GM12878 (cell line): ENCODE measurements at regions of chr11 and their contacts with region 1.

Region 1: DNA sequence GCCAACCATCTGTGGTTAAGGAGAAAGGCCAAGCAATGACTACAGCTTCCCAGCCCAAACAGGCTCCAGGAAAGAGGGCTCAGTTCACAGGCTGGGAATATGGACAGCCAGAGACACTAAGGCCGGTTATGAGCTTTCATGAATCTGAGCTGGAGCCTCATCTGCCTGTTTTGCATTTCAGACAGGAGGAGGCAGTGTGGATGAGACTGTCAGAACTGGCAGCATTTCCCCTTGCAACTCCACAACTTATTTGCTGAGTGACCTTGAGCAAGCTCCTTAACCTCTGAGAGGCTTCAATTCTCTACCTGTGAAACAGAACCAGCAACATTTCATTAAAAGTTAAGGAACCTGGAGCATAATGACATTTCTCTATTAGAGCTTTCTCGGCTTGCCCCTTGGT is 264.0 kb downstream of the ETS1 start:
- DNase-seq: no peak
- ATAC-seq: peak; percentile 43
- H3K4me3 ChIP-seq: no peak overlapping the region
- H3K27ac ChIP-seq: no peak overlapping the region
- H3K4me1 ChIP-seq: peaks cover 11% of the 10 kb centered on the region
- H3K27me3 ChIP-seq: no peaks in the 10 kb centered on the region
- CTCF ChIP-seq: peak; percentile 41 to 46 (median 45); a peak in 5 of 6 replicates
- EP300 ChIP-seq: no peak
- POLR2A ChIP-seq: no peak
- RAD21 ChIP-seq: peak; percentile 74

Region 2: DNA sequence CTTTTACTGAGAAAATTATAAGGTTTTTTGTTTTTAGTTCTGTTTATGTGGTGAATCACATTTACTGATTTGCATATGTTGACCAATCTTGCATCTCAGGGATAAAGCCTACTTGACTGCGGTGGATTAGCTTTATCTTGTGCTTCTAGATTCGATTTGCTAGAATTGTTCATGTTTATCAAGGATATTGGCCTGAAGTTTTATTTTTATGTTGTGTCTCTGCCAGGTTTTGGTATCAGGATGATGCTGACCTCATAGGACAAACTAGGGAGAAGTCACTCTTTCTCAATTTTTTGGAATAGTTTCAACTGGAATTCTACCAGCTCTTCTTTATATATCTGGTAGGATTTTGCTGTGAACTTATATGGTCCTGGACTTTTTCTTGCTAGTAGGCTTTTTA is 240.8 kb before region 1 on chr11:
- CTCF ChIA-PET with region 1: no interaction called
- POLR2A ChIA-PET with region 1: no interaction called
- RAD21 ChIA-PET with region 1: no interaction called
- SMC1A ChIA-PET with region 1: no interaction called
- in situ Hi-C with region 1: no loop called
- intact Hi-C with region 1: no loop called
- DNase-seq: no peak
- ATAC-seq: no peak
- H3K4me3 ChIP-seq: no peak overlapping the region
- H3K27ac ChIP-seq: no peak overlapping the region
- H3K4me1 ChIP-seq: no peaks in the 10 kb centered on the region
- H3K27me3 ChIP-seq: no peaks in the 10 kb centered on the region
- CTCF ChIP-seq: no peak
- EP300 ChIP-seq: no peak
- POLR2A ChIP-seq: no peak
- RAD21 ChIP-seq: no peak

Region 3: DNA sequence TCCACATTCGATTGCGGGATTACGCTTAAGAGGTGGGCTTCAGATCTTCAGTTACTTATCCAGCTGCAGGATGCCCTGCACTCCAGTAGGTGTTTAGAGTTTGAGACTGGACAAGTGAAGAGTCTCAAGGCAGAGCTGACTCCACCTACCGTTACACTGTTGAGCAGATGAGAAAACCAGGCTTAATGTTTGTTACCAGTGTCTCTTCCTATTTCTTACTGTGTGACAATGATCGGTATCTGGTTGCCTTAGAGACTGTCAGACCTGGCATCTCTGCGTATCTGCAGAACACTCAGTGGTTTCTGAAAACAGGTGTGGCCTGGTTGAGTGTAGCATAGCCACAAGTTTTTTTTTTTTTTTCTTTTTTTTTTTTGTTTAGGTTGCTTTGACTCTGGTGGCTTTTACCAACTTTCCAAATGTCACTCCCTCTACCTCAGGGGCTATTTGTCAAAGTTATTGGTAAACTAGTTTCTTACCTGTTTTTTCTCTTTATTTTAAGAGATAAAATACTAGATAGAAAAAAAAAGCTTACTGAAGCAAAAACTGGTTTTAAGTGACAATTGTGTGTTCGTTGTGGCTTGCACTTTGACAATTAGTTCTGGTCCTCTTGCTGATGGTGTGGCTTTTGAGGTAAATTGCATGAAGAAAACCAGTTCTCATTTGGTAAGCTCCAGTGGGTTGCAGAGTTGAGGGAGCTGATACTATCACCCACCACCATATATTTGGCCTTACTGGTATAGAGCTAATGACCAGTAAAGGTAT is 20.8 kb before region 1 on chr11:
- CTCF ChIA-PET with region 1: interaction called, 9 read pairs
- POLR2A ChIA-PET with region 1: interaction called, 8 read pairs
- RAD21 ChIA-PET with region 1: interaction called, 25 read pairs
- SMC1A ChIA-PET with region 1: interaction called, 104 read pairs
- in situ Hi-C with region 1: no loop called
- intact Hi-C with region 1: no loop called
- DNase-seq: peak; percentile 82
- ATAC-seq: peak; percentile 89
- H3K4me3 ChIP-seq: no peak overlapping the region
- H3K27ac ChIP-seq: peak overlapping the region; percentile 35; the same call in 1 of the 2 replicates
- H3K4me1 ChIP-seq: peaks cover 62% of the 10 kb centered on the region
- H3K27me3 ChIP-seq: no peaks in the 10 kb centered on the region
- CTCF ChIP-seq: 0 out of 6 replicates have a peak, but pooled peaks of 1 of the 3 experiments have one; percentile 11
- EP300 ChIP-seq: peak; percentile 6 to 8; a peak in 1 of 4 replicates
- POLR2A ChIP-seq: no peak
- RAD21 ChIP-seq: no peak

Region 4: GRCh38 chr11:128311742-128312719 is 11.3 kb before region 1 on chr11:
- CTCF ChIA-PET with region 1: interaction called, 4 read pairs
- POLR2A ChIA-PET with region 1: interaction called, 3 read pairs
- RAD21 ChIA-PET with region 1: interaction called, 3 read pairs
- SMC1A ChIA-PET with region 1: interaction called, 17 read pairs
- in situ Hi-C with region 1: no loop called
- intact Hi-C with region 1: no loop called
- DNase-seq: no peak
- ATAC-seq: peak; percentile 81
- H3K4me3 ChIP-seq: no peak overlapping the region
- H3K27ac ChIP-seq: peak overlapping the region; percentile 17; the same call in 1 of the 2 replicates
- H3K4me1 ChIP-seq: peaks cover 6% of the 10 kb centered on the region
- H3K27me3 ChIP-seq: no peaks in the 10 kb centered on the region
- CTCF ChIP-seq: no peak
- EP300 ChIP-seq: no peak
- POLR2A ChIP-seq: no peak
- RAD21 ChIP-seq: no peak

Region 5: DNA sequence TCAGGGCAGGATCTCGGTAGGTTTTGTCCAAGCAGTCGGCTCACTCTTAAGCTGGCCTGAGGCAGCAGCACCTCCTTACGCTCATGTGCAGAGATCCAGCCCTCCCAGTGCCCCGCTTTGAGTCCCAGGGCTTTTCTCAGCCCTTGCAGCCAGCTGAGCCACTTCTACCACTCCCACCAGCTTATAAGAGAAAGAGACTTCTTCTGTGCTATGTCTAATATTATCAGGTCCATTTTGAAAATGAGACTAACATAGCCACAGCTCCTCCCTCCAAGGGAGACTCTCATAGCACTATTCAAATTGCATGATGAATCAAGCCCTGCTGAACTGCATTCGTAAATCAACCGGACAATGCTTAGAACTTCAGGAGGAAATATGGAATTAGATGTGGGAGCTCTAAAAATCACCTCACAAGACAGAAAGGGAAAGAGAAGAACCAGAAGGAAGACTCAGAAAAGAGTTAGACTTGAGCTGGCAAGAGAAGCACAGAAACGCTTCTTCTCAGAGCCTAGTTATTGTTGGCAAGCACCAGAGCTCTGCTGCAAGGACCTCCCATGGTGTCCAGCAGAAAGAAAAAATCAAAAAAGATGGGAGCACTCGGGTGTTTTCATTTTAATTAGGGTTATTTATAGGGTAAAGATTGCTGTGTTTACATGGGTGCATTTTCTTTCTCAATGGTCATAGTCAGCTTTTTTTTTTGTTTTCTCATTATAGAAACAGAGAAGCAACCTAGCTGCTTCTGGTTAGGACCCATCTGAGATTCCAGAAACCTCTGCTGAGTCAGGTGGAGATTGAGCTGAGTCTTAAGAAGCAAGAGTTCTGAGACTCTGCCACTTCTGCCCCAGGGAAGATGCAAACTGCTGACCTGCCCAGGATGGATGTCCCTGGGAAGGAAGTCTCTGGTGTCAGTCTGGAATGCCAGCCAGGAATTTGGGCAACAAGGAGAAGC is 82.6 kb after region 1 on chr11:
- CTCF ChIA-PET with region 1: interaction called, 7 read pairs
- POLR2A ChIA-PET with region 1: no interaction called
- RAD21 ChIA-PET with region 1: no interaction called
- SMC1A ChIA-PET with region 1: interaction called, 10 read pairs
- in situ Hi-C with region 1: no loop called
- intact Hi-C with region 1: no loop called
- DNase-seq: no peak
- ATAC-seq: peak; percentile 47
- H3K4me3 ChIP-seq: no peak overlapping the region
- H3K27ac ChIP-seq: no peak overlapping the region
- H3K4me1 ChIP-seq: no peaks in the 10 kb centered on the region; the same call in 1 of the 2 replicates
- H3K27me3 ChIP-seq: no peaks in the 10 kb centered on the region
- CTCF ChIP-seq: no peak
- EP300 ChIP-seq: no peak
- POLR2A ChIP-seq: no peak
- RAD21 ChIP-seq: no peak